ENCODE measurements at regions of chr11 and their contacts with region 1.

Region 1: DNA sequence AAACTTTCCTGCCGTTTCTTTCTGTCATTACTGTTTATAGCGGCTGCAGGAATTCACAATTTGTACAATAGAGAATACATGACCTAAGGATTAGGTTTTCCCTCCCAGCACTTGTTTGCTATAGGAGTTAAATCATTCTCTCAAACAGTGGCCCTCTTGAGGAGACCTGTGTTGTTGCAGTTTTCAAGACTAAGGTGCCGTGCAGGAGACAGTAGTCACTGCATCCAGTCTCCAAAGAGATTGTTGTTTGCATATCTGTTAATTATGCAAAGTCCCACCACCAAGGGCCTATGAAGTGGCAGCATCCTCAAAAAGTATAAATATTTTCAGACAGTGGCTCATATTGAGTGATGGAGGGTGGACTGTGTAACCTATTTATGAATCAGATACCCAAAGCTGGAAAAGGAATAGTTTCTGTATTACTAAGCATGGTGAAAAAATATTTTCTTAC is 2.3 kb downstream of the PRSS23 start:
- DNase-seq: no peak
- ATAC-seq: peak; percentile 55

Region 2: GRCh38 chr11:86620891-86621521 is 181.6 kb before region 1 on chr11:
- intact Hi-C with region 1: loop called (anchors 10 kb)
- DNase-seq: no peak
- ATAC-seq: peak; percentile 54

Region 3: GRCh38 chr11:86990515-86990914 is 187.9 kb after region 1 on chr11:
- intact Hi-C with region 1: no loop called
- DNase-seq: no peak
- ATAC-seq: peak; percentile 12